ENCODE measurements at regions of chr5 and their contacts with region 1.

Region 1: GRCh38 chr5:177339107-177339638 is 12.3 kb downstream of the LMAN2 start:
- DNase-seq: no peak
- H3K4me3 ChIP-seq: no peak overlapping the region
- H3K27ac ChIP-seq: no peak overlapping the region
- H3K27me3 ChIP-seq: no peaks in the 10 kb centered on the region
- CTCF ChIP-seq: no peak

Region 2: GRCh38 chr5:177232761-177233160 is 106.4 kb before region 1 on chr5:
- CTCF ChIA-PET with region 1: no interaction called
- POLR2A ChIA-PET with region 1: no interaction called
- DNase-seq: no peak
- H3K4me3 ChIP-seq: no peak overlapping the region
- H3K27ac ChIP-seq: no peak overlapping the region
- H3K27me3 ChIP-seq: no peaks in the 10 kb centered on the region
- CTCF ChIP-seq: no peak

Region 3: GRCh38 chr5:177327539-177328522 is 11.3 kb before region 1 on chr5:
- CTCF ChIA-PET with region 1: interaction called, 11 read pairs
- POLR2A ChIA-PET with region 1: no interaction called
- DNase-seq: no peak
- H3K4me3 ChIP-seq: no peak overlapping the region
- H3K27ac ChIP-seq: no peak overlapping the region
- H3K27me3 ChIP-seq: no peaks in the 10 kb centered on the region
- CTCF ChIP-seq: no peak

Measured in AG04450 (cell line).